Left colon (tissue), 2 donors: ENCODE measurements at regions of chr18 and their contacts with region 1.

Region 1: DNA sequence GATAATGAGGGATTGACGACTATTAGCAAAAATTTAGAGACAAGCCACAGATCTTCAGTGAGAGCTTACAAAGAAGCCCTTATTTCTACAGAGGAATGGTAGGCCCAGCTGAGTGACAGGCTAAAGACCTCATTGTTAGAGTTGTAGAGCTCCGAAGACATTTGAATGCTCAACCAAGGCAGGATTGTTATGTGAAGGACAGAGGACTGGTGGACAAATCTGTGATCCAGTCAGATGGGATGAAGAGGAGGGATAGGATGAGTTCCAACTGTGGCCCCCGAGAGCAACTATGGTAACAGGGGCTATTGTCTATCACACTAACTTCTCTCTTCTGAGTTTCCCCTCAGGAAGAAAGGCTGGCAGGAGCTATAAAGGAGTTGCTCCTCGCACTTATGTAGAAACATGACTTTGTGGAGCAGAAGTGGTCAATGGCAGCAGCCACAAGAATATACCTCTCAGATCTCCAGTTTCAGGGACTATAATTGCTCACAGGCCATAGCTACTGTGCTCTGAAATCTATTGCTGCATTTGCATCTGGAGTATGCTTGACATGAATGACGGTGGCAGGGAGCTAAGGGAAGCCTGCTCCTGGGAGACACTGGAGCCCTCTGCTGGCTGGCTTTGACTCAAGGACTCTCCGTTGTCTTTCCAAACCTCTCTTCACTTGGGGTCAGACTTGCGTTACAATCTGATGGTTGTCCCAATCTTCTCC is 50.3 kb upstream of the GREB1L start:
- DNase-seq: peak in 1 of 2 donors; percentile 62
- ATAC-seq: peak; percentile 71

Region 2: GRCh38 chr18:21444465-21445023 is 252.8 kb after region 1 on chr18:
- intact Hi-C with region 1: loop called in 1 of 2 experiments (anchors 5 kb)
- DNase-seq: peak in 1 of 2 donors; percentile 10
- ATAC-seq: peak; percentile 55

Region 3: GRCh38 chr18:21955757-21956652 is 764.3 kb after region 1 on chr18:
- intact Hi-C with region 1: loop called in 1 of 2 experiments (anchors 5 kb)
- DNase-seq: peak; percentile 69 to 89
- ATAC-seq: peak; percentile 93